ENCODE measurements at regions of chr1 and their contacts with region 1.

Region 1: DNA sequence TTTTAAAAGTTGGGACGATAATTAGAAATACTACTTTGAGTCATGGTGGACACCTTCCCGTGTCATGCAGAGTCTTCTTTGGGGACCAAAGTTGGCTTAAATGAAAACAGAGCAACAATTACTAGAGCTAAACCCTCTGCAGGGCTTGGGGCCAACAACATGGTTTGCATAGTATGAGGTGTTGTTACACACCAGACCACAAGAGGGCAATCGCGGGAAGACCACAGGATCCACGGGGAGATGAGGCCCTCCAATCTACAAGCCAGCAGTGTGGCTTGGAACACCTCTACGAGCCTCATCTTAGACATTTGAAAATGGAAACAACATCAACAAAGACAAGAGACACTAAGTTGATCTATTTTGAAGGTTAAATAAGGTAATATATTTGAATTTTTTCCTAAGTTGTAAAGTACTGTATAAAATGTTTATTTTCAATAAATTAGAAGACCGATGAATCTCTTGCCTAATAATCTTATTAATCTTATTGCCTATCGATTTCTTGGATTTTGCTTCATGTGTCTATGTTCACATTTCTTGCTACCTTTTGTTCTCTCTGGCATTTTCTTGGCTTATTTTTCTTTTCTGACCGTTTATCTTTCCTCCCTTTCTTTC is 8.2 kb upstream of the SMCP start:
- DNase-seq: no peak
- H3K4me3 ChIP-seq: no peak overlapping the region
- H3K27ac ChIP-seq: no peak overlapping the region
- H3K4me1 ChIP-seq: peaks cover 0 to 4% (median 0%) of the 10 kb centered on the region in 3 donors
- H3K27me3 ChIP-seq: no peaks in the 10 kb centered on the region
- CTCF ChIP-seq: peak in 5 of 6 experiments; percentile 68 to 84 (median 77)
- POLR2A ChIP-seq: no peak

Region 2: GRCh38 chr1:152654110-152654509 is 215.8 kb before region 1 on chr1:
- intact Hi-C with region 1: loop called (anchors 10 kb)
- DNase-seq: no peak
- H3K4me3 ChIP-seq: no peak overlapping the region
- H3K27ac ChIP-seq: no peak overlapping the region
- H3K4me1 ChIP-seq: no peaks in the 10 kb centered on the region
- H3K27me3 ChIP-seq: no peaks in the 10 kb centered on the region
- CTCF ChIP-seq: peak; percentile 34 to 73 (median 62)
- POLR2A ChIP-seq: no peak

Region 3: DNA sequence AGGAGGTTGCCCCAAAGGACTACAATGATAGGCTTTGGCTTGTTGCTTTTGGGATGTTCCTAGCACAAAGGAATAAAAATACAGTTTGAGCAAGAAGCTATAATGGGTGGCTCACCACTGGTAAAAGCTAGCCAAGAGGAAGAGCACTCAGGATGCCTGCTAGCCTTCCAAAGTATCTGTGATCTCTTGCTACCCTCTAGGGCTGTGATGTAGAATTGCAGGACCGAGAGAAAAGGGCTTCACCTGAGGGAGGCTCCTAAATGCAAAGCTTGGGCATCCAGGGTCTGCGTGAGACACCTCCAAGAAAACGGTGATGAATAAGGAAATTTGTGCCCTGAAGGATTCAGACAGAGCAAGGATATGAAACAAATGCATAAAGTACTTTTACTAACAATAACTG is 56.2 kb after region 1 on chr1:
- intact Hi-C with region 1: loop called (anchors 5 kb)
- DNase-seq: no peak
- H3K4me3 ChIP-seq: no peak overlapping the region
- H3K27ac ChIP-seq: no peak overlapping the region
- H3K4me1 ChIP-seq: no peaks in the 10 kb centered on the region
- H3K27me3 ChIP-seq: no peaks in the 10 kb centered on the region
- CTCF ChIP-seq: peak; percentile 32 to 84 (median 48)
- POLR2A ChIP-seq: no peak

Region 4: DNA sequence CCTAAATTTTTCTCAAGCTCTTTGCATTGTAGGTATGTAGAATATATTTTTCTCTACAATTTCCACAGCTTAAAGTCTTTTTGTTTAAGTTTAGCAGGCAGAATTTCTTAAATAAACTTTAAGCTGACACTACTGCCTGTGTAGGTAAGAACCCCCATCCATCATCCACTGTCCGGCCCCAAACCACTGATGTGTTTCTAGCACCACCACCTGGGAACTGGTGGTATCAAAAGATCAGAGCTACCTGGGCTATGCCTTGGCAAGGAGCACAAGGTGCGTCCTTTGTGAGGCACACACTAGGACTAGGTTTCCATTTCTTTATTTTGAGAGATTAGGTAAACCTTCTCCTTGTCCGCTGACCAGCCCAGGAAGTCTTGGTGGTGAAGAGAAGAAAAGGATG is 322.8 kb after region 1 on chr1:
- intact Hi-C with region 1: loop called (anchors 2 kb)
- DNase-seq: no peak
- H3K4me3 ChIP-seq: no peak overlapping the region
- H3K27ac ChIP-seq: no peak overlapping the region
- H3K4me1 ChIP-seq: peaks cover 0 to 13% (median 2%) of the 10 kb centered on the region in 3 donors
- H3K27me3 ChIP-seq: peaks cover 0 to 4% (median 0%) of the 10 kb centered on the region in 4 donors
- CTCF ChIP-seq: peak in 5 of 6 experiments; percentile 16 to 82 (median 63)
- POLR2A ChIP-seq: no peak

Measured in esophagus squamous epithelium (tissue), 5 donors.